Gastrocnemius medialis (tissue), 4 donors: ENCODE measurements at regions of chr1 and their contacts with region 1.

Region 1: GRCh38 chr1:23772049-23772853 is 6.0 kb upstream of the PITHD1 start:
- DNase-seq: peak; percentile 58 to 80
- ATAC-seq: peak; percentile 83 to 92
- H3K4me3 ChIP-seq: no peak overlapping the region
- H3K27ac ChIP-seq: no peak overlapping the region
- H3K4me1 ChIP-seq: peaks cover 4 to 14% of the 10 kb centered on the region in 2 donors
- H3K27me3 ChIP-seq: no peaks in the 10 kb centered on the region
- CTCF ChIP-seq: peak; percentile 69 to 93 (median 80)
- POLR2A ChIP-seq: no peak

Region 2: GRCh38 chr1:23916209-23917131 is 144.2 kb after region 1 on chr1:
- in situ Hi-C with region 1: no loop called
- intact Hi-C with region 1: loop called (anchors 2 kb)
- DNase-seq: peak; percentile 14 to 25
- ATAC-seq: peak; percentile 50 to 63
- H3K4me3 ChIP-seq: no peak overlapping the region
- H3K27ac ChIP-seq: no peak overlapping the region
- H3K4me1 ChIP-seq: peaks cover 13 to 15% of the 10 kb centered on the region in 2 donors
- H3K27me3 ChIP-seq: no peaks in the 10 kb centered on the region
- CTCF ChIP-seq: peak; percentile 18 to 44 (median 28)
- POLR2A ChIP-seq: no peak